A549 (cell line): ENCODE measurements at regions of chr12 and their contacts with region 1.

Region 1: GRCh38 chr12:52023182-52023975 is 16.6 kb downstream of the TAMALIN start:
- DNase-seq: peak; percentile 94 to 95
- ATAC-seq: peak; percentile 63 to 79
- H3K4me3 ChIP-seq: peak overlapping the region; percentile 71
- H3K27ac ChIP-seq: peak overlapping the region; percentile 83 to 93
- H3K4me1 ChIP-seq: peaks cover 32% of the 10 kb centered on the region
- CTCF ChIP-seq: peak; percentile 93
- EP300 ChIP-seq: no peak
- POLR2A ChIP-seq: peak; percentile 37
- RAD21 ChIP-seq: peak; percentile 88 to 95

Region 2: GRCh38 chr12:51898937-51899336 is 124.4 kb before region 1 on chr12:
- CTCF ChIA-PET with region 1: interaction called, 31 read pairs
- POLR2A ChIA-PET with region 1: no interaction called
- DNase-seq: no peak
- ATAC-seq: no peak
- H3K4me3 ChIP-seq: no peak overlapping the region
- H3K27ac ChIP-seq: no peak overlapping the region
- H3K4me1 ChIP-seq: no peaks in the 10 kb centered on the region
- CTCF ChIP-seq: no peak
- EP300 ChIP-seq: no peak
- POLR2A ChIP-seq: no peak
- RAD21 ChIP-seq: no peak

Region 3: GRCh38 chr12:52069327-52070184 is 46.2 kb after region 1 on chr12 and contains the start of gene ATG101:
- CTCF ChIA-PET with region 1: interaction called, 1,730 read pairs
- POLR2A ChIA-PET with region 1: interaction called, 18 read pairs
- DNase-seq: peak; percentile 98
- ATAC-seq: peak; percentile 93 to 95
- H3K4me3 ChIP-seq: peak within 1 kb of the TSS; percentile 100
- H3K27ac ChIP-seq: peak within 1 kb of the TSS; percentile 98 to 100
- H3K4me1 ChIP-seq: peaks cover 16% of the 10 kb centered on the region
- CTCF ChIP-seq: peak; percentile 54
- EP300 ChIP-seq: no peak
- POLR2A ChIP-seq: peak; percentile 92
- RAD21 ChIP-seq: peak in 1 of 2 experiments; percentile 20; a peak in 3 of 5 replicates
- polyA plus RNA-seq, gene ATG101: 124 and 141 TPM in 2 replicates

Region 4: GRCh38 chr12:52121824-52122539 is 98.6 kb after region 1 on chr12:
- CTCF ChIA-PET with region 1: interaction called, 304 read pairs
- POLR2A ChIA-PET with region 1: no interaction called
- DNase-seq: peak; percentile 67 to 68
- ATAC-seq: peak; percentile 64 to 75
- H3K4me3 ChIP-seq: no peak overlapping the region
- H3K27ac ChIP-seq: no peak overlapping the region
- H3K4me1 ChIP-seq: peaks cover 5% of the 10 kb centered on the region; the same call in 2 of the 3 replicates
- CTCF ChIP-seq: peak; percentile 80
- EP300 ChIP-seq: no peak
- POLR2A ChIP-seq: no peak
- RAD21 ChIP-seq: peak; percentile 77 to 79

Region 5: GRCh38 chr12:52870351-52871290 is 847.2 kb after region 1 on chr12:
- CTCF ChIA-PET with region 1: interaction called, 12 read pairs
- POLR2A ChIA-PET with region 1: no interaction called
- DNase-seq: peak; percentile 83 to 86
- ATAC-seq: peak; percentile 33 to 71
- H3K4me3 ChIP-seq: no peak overlapping the region
- H3K27ac ChIP-seq: peak overlapping the region; percentile 94 to 97
- H3K4me1 ChIP-seq: peaks cover 80% of the 10 kb centered on the region
- CTCF ChIP-seq: peak; percentile 96
- EP300 ChIP-seq: no peak
- POLR2A ChIP-seq: no peak
- RAD21 ChIP-seq: peak; percentile 98 to 100